ENCODE measurements at regions of chrX and their contacts with region 1.

Region 1: DNA sequence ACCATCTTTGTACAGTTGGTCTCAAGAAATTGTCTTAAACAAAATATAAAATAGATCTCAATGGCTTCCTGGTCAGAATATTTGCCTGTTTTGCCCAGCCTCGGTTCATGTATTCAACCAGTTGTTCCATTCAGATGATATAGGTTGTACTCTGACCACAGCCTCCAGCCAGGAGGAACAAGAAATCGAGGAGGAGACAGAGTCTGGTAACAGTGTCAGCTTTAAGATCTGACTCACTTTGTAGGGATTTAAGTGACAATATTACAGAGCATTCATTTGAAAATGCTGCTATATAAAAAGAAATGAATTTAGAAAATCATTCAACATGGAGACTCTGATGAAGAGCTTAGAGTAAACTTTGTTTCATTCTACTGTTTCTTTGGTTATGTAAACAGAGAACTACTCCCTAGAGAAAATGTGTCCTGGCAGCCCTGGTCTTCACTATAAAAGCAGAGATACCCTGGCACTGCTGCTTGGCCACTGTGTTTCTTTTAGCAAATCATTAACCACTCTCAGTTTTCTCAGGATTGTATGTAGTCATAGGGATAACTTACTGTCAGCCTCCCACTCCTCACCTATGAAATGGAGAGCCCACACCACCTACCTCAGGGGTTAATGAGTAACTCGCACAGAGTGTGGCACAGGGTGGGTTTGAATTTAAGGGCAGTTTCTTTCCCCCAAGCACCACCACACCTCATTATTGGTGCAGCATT is 53.5 kb downstream of the PAGE2 start:
- DNase-seq: no peak
- ATAC-seq: no peak
- H3K4me3 ChIP-seq: no peak overlapping the region
- H3K4me3 Mint-ChIP-seq: no peak overlapping the region
- H3K27ac ChIP-seq: no peak overlapping the region
- H3K27ac Mint-ChIP-seq: no peak overlapping the region
- H3K4me1 ChIP-seq: no peaks in the 10 kb centered on the region
- H3K4me1 Mint-ChIP-seq: no peaks in the 10 kb centered on the region
- H3K27me3 ChIP-seq: no peaks in the 10 kb centered on the region
- H3K27me3 Mint-ChIP-seq: peaks cover 0 to 9% of the 10 kb centered on the region in 2 donors

Region 2: GRCh38 chrX:54482839-54483593 is 659.3 kb before region 1 on chrX:
- CTCF ChIA-PET with region 1: no interaction called
- POLR2A ChIA-PET with region 1: interaction called in 1 of 2 experiments, 10 read pairs
- DNase-seq: no peak
- ATAC-seq: no peak
- H3K4me3 ChIP-seq: no peak overlapping the region
- H3K4me3 Mint-ChIP-seq: no peak overlapping the region
- H3K27ac ChIP-seq: no peak overlapping the region
- H3K27ac Mint-ChIP-seq: no peak overlapping the region
- H3K4me1 ChIP-seq: no peaks in the 10 kb centered on the region
- H3K4me1 Mint-ChIP-seq: no peaks in the 10 kb centered on the region
- H3K27me3 ChIP-seq: peaks cover 0 to 5% of the 10 kb centered on the region in 2 experiments
- H3K27me3 Mint-ChIP-seq: peaks cover 0 to 19% of the 10 kb centered on the region in 2 donors

Measured in T-cell (primary cell).